ENCODE measurements at regions of chr5 and their contacts with region 1.

Region 1: DNA sequence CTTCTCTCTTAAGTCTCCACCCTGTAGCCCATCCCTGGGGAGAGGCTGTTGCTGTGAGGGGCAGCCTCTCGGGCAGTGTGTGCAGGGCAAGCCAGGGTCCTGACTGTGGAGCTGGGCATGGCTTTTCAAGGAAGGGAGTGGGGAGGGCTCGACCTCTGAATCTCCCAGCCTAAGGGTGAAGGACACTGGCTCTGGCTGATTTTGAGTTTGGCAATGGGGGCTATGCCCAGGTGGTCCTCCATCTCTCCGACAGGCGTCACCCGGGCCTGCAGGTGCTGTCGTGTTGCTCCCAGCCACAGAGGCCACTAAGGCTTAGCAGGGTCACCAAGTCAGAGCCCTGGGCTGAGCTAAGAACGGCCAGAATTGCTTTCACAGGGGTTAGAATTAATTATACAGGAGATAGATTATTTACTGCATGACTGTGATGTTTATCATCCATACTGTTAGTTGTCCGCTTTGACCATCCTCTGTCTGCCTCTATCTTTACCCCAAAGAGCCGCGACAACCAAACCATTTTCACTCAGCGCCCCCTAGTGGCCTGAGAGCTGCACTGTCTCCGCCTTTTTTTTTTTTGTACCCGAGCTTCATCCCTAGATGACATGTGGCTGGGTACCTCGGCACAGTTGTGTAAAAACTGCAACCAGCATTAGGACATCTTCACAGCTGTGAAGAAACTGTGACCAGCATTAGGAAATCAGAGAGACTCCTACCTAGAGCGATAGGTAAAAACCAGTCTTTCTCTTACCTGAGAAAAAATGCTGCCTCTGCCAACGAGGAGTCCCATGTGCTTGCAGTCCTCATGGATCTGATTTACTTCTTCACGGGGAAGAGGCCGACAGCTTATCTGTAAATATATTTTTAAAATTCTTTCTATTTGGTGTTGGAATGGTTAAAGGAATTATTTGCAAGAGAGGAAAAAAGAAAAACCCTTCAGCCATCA is 44.5 kb downstream of the AGXT2 start:
- DNase-seq: peak; percentile 44 to 75
- H3K4me3 ChIP-seq: no peak overlapping the region
- H3K4me1 ChIP-seq: no peaks in the 10 kb centered on the region
- H3K27me3 ChIP-seq: 0 out of 2 replicates have a peak, but pooled peaks cover 7% of the 10 kb centered on the region

Region 2: GRCh38 chr5:34026089-34026761 is 977.1 kb before region 1 on chr5:
- in situ Hi-C with region 1: no loop called
- DNase-seq: no peak
- H3K4me3 ChIP-seq: no peak overlapping the region
- H3K4me1 ChIP-seq: peaks cover 6% of the 10 kb centered on the region; the same call in 1 of the 2 replicates
- H3K27me3 ChIP-seq: no peaks in the 10 kb centered on the region

Region 3: GRCh38 chr5:34486160-34486848 is 517.0 kb before region 1 on chr5:
- in situ Hi-C with region 1: loop called (anchors 25 kb)
- DNase-seq: peak; percentile 73 to 89
- H3K4me3 ChIP-seq: no peak overlapping the region
- H3K4me1 ChIP-seq: peaks cover 8% of the 10 kb centered on the region
- H3K27me3 ChIP-seq: peaks cover 3% of the 10 kb centered on the region; the same call in 1 of the 2 replicates